ENCODE measurements at regions of chr5 and their contacts with region 1.

Region 1: DNA sequence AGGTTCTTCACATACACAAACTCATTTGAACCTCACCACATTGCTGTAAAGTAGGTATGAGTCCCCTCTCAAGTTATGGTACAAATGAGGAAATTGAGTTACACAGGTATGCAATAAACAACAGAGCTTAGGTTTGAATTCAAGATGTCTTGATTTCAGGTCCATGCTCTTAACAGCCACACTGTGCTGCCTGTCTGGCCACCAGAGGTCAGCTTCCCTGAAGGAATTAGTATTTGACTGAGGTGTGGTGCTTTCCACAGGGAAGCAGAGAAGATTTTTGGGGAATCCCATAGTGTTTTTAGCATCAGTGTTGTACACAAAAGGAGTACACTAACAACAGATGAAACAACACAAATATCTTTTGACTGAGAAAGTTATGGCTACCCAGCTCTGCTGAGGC is 94.4 kb upstream of the ITGA1 start:
- DNase-seq: no peak
- H3K4me3 ChIP-seq: no peak overlapping the region
- H3K27ac ChIP-seq: no peak overlapping the region
- H3K4me1 ChIP-seq: no peaks in the 10 kb centered on the region
- H3K27me3 ChIP-seq: no peaks in the 10 kb centered on the region
- CTCF ChIP-seq: peak; percentile 68 to 80 (median 73)

Region 2: GRCh38 chr5:52915176-52915875 is 222.0 kb after region 1 on chr5:
- dilution Hi-C with region 1: loop called (anchors 25 kb)
- DNase-seq: peak; percentile 23
- H3K4me3 ChIP-seq: peak overlapping the region; percentile 2 to 58 (median 46)
- H3K27ac ChIP-seq: no peak overlapping the region
- H3K4me1 ChIP-seq: no peaks in the 10 kb centered on the region
- H3K27me3 ChIP-seq: no peaks in the 10 kb centered on the region
- CTCF ChIP-seq: peak; percentile 75 to 79 (median 77)

Region 3: GRCh38 chr5:52989781-52990527 is 296.7 kb after region 1 on chr5:
- dilution Hi-C with region 1: no loop called
- DNase-seq: no peak
- H3K4me3 ChIP-seq: peak overlapping the region; percentile 75 to 99 (median 85)
- H3K27ac ChIP-seq: peak overlapping the region; percentile 96
- H3K4me1 ChIP-seq: peaks cover 67% of the 10 kb centered on the region
- H3K27me3 ChIP-seq: no peaks in the 10 kb centered on the region
- CTCF ChIP-seq: peak; percentile 41 to 42 (median 42)

Region 4: DNA sequence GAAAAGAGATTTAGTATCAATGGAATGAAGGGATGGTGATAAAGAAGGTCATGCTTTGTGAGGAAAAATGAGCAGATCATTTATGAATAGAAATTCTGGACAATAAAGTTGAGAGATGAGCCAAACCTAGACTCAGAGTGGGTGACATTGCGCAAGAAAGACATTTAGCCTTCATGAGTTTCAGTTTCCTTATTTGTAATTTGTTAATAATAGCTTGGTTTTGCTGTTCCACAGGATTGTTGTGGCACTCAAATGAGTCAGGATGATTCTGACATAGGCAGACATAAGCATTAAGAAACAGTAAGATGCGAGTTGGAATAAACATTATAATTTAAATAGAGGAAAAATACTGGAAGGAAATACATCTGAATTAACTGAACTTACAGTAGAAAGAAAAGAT is 330.7 kb after region 1 on chr5:
- dilution Hi-C with region 1: no loop called
- DNase-seq: no peak
- H3K4me3 ChIP-seq: no peak overlapping the region
- H3K27ac ChIP-seq: peak overlapping the region; percentile 65
- H3K4me1 ChIP-seq: peaks cover 50% of the 10 kb centered on the region
- H3K27me3 ChIP-seq: no peaks in the 10 kb centered on the region
- CTCF ChIP-seq: no peak